PC-9 (cell line): ENCODE measurements at regions of chr14 and their contacts with region 1.

Region 1: GRCh38 chr14:99612738-99613330 is 8.8 kb upstream of the CCDC85C start:
- DNase-seq: no peak
- H3K4me3 ChIP-seq: no peak overlapping the region
- H3K27ac ChIP-seq: no peak overlapping the region
- H3K4me1 ChIP-seq: no peaks in the 10 kb centered on the region
- H3K27me3 ChIP-seq: no peaks in the 10 kb centered on the region
- CTCF ChIP-seq: no peak

Region 2: GRCh38 chr14:99569725-99570543 is 42.9 kb before region 1 on chr14:
- CTCF ChIA-PET with region 1: no interaction called
- POLR2A ChIA-PET with region 1: interaction called, 12 read pairs
- intact Hi-C with region 1: no loop called
- DNase-seq: no peak
- H3K4me3 ChIP-seq: no peak overlapping the region
- H3K27ac ChIP-seq: no peak overlapping the region
- H3K4me1 ChIP-seq: peaks cover 31% of the 10 kb centered on the region
- H3K27me3 ChIP-seq: no peaks in the 10 kb centered on the region
- CTCF ChIP-seq: no peak